Activated T-helper 1 cell treated with anti-CD3 and anti-CD28 coated beads, Interleukin-12 subunit alpha, Interleukin-12 subunit beta, Interleukin-2, Interleukin-4 antibody, amounts not matched to agents 30 ng/mL and 10 ng/mL and 1 ng/mL, durations not matched to agents 14 hours and 24 hours and 36 hours (primary cell): ENCODE measurements at regions of chr2 and their contacts with region 1.

Region 1: DNA sequence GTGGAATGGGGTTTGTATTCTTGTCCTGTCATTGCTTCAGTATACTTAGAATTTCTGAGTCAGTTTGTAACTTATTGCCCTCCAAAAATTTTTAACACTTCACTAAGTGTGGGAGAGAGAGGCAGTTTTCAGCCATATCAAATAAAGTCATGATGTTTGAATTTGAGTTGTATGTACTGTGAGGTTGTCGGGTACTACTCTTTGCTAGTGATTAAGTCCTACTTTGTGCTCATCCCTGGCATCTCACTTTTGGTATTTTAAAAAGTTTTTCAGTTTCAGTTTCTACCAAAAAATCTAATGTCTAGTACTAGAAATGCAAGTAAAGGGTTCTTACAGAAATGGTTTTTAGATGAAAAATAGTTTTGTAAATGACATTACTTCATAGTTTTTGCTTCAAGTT is 40.7 kb downstream of the EIF5B start:
- DNase-seq: no peak
- H3K4me3 Mint-ChIP-seq: peak overlapping the region; percentile 19
- H3K27ac Mint-ChIP-seq: no peak overlapping the region
- H3K4me1 Mint-ChIP-seq: peaks cover 19% of the 10 kb centered on the region
- H3K27me3 Mint-ChIP-seq: no peaks in the 10 kb centered on the region

Region 2: DNA sequence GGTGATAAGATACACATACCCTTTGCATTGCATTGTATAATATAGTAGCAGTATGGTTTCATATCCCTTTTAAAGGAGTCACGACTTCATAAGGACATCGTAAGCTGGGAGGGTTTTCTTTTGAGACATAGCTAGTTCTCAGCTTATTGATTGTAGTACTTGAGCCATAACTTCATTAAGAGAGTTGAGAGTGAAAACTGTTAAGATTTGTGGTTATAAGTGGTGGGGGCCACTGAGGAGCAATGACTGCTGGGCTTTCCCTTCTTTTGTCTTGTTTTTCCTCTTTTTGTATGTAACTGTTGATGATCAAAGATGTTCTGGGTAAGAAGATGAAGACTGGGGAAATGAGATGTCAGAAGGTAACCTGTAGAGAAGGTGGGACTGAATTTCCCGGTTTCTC is 29.7 kb before region 1 on chr2:
- intact Hi-C with region 1: loop called (anchors 2 kb)
- DNase-seq: no peak
- H3K4me3 Mint-ChIP-seq: no peak overlapping the region
- H3K27ac Mint-ChIP-seq: peak overlapping the region; percentile 65
- H3K4me1 Mint-ChIP-seq: peaks cover 36% of the 10 kb centered on the region
- H3K27me3 Mint-ChIP-seq: no peaks in the 10 kb centered on the region

Region 3: DNA sequence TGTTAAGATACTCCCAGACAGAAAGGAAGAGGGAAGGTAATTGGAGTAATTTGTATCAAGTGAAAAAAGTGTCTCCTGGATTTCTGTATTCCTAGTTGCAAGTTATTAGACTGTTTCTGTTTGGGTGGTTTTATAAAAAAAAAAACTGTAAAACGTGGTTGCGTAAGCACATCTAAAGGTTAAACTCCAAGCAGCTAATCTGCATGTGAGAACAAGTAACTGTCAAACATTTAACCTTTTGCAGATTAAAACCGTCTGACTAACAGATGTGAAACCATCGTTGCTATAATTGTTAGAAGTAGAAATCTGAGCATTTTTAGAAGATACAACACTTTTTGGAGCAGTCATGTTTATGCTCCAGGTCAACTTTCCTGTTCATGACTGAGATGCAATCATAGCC is 692.2 kb after region 1 on chr2:
- intact Hi-C with region 1: loop called (anchors 5 kb)
- DNase-seq: no peak
- H3K4me3 Mint-ChIP-seq: no peak overlapping the region
- H3K27ac Mint-ChIP-seq: no peak overlapping the region
- H3K4me1 Mint-ChIP-seq: no peaks in the 10 kb centered on the region
- H3K27me3 Mint-ChIP-seq: peaks cover 8% of the 10 kb centered on the region